ENCODE measurements at regions of chr15 and their contacts with region 1.

Region 1: DNA sequence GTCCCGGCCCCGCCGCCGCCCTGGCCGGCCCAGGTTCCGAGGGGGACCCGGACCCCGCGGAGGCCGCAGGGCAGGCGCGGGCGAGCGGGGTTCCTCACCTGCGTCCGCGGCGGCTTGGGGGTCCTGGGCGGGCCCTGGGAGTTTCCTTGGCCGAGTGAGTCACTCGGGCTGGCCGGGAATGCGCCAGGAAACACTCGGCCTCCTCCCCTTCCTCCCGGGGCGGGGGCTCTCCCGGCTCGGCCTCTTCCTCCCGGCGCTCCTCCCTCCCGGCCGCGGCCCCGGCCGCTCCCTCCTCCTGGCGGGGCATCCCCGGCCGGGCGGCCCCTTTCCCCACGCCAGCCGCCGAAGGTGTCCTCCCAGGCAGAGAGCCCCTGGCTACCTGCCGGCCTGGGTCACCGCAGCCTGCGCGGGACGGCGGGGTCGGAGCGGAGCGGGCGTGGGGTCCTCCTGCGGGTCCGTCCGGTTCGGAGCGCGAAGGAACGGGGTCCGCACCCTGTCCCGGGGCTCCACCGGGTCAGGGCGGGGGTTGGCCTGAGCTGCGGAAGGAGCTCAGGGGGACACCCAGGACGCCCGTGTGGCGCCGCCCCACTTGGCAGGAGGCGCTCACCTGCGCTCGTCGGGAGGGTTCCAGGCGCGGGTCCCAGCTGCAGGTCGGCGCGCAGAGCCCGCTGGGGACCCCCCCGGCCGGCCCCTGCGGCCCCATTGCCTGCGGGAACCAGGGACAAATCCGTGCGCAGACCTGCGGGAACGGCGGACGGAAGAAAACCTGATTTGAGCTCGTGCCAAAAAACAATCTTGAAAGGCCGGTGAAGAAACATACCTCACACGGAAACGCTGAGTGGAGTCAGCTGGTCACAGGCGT is at the start of gene CYFIP1:
- DNase-seq: peak; percentile 90 to 94
- H3K4me3 ChIP-seq: peak within 1 kb of the TSS; percentile 94
- H3K4me3 Mint-ChIP-seq: peak within 1 kb of the TSS; percentile 91
- H3K27ac Mint-ChIP-seq: peak within 1 kb of the TSS; percentile 70
- H3K4me1 ChIP-seq: peaks cover 4% of the 10 kb centered on the region; the same call in 1 of the 2 replicates
- H3K4me1 Mint-ChIP-seq: peaks cover 6% of the 10 kb centered on the region
- H3K27me3 ChIP-seq: no peaks in the 10 kb centered on the region
- H3K27me3 Mint-ChIP-seq: no peaks in the 10 kb centered on the region
- CTCF ChIP-seq: no peak
- total RNA-seq, gene CYFIP1: 205 and 211 TPM in 2 replicates

Region 2: GRCh38 chr15:22936577-22937472 is 43.6 kb before region 1 on chr15:
- CTCF ChIA-PET with region 1: interaction called, 3 read pairs
- POLR2A ChIA-PET with region 1: interaction called, 11 read pairs
- intact Hi-C with region 1: no loop called
- DNase-seq: no peak
- H3K4me3 ChIP-seq: no peak overlapping the region
- H3K4me3 Mint-ChIP-seq: no peak overlapping the region
- H3K27ac Mint-ChIP-seq: no peak overlapping the region
- H3K4me1 ChIP-seq: no peaks in the 10 kb centered on the region
- H3K4me1 Mint-ChIP-seq: no peaks in the 10 kb centered on the region
- H3K27me3 ChIP-seq: no peaks in the 10 kb centered on the region
- H3K27me3 Mint-ChIP-seq: no peaks in the 10 kb centered on the region
- CTCF ChIP-seq: no peak

Region 3: DNA sequence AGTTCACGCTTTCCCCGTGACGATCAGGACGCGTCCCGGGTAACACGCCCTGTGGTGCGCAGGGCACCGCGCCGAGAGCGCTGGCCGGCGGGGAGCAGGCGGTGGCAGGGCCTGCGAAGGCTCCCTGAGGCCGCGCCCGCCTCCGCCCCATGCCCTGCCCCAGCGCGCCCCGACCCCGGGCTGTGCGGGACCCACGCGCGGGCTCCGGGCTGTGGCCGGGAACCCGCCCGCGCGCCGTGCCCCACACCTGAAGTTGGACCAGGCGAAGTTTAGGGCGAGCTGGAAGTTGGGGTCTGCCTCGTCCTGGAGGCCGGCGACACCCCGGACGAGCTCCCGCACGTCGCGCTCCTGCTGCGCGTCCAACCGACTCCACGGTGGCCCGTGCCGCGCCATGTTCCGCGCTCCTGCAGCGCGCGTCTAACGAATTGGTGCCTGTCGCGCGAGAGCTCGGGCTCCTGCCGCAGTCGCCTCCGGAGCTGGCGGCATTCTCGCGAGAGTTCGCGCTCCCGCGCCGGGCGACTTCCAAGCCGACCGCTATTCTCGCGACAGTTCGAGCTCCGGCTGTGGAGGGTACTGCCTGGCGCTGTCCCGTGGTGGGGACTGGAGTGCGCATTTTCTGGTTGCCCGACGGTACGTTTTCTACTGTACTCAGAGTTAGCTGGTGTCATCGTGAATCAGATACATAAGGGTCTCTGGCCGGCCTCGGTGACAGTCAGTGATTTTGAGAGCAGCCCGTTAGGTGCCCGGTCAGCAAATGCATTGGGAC is 58.9 kb after region 1 on chr15 and contains the start of gene TUBGCP5:
- CTCF ChIA-PET with region 1: no interaction called
- POLR2A ChIA-PET with region 1: interaction called, 10 read pairs
- intact Hi-C with region 1: loop called (anchors 2 kb)
- DNase-seq: peak; percentile 99 to 100
- H3K4me3 ChIP-seq: peak within 1 kb of the TSS; percentile 79
- H3K4me3 Mint-ChIP-seq: peak within 1 kb of the TSS; percentile 99
- H3K27ac Mint-ChIP-seq: peak within 1 kb of the TSS; percentile 99
- H3K4me1 ChIP-seq: peaks cover 11% of the 10 kb centered on the region
- H3K4me1 Mint-ChIP-seq: peaks cover 17% of the 10 kb centered on the region
- H3K27me3 ChIP-seq: no peaks in the 10 kb centered on the region
- H3K27me3 Mint-ChIP-seq: no peaks in the 10 kb centered on the region
- CTCF ChIP-seq: peak; percentile 27 to 44
- total RNA-seq, gene TUBGCP5: 48.3 and 53.1 TPM in 2 replicates

Measured in Caco-2 (cell line).